Heart left ventricle (tissue), 16 donors: ENCODE measurements at regions of chr15 and their contacts with region 1.

Region 1: GRCh38 chr15:91833056-91833455 is 20.5 kb upstream of the SLCO3A1 start:
- DNase-seq: no peak
- ATAC-seq: no peak
- H3K4me3 ChIP-seq: no peak overlapping the region
- H3K27ac ChIP-seq: no peak overlapping the region
- H3K4me1 ChIP-seq: peaks cover 0 to 4% (median 0%) of the 10 kb centered on the region in 12 donors
- H3K27me3 ChIP-seq: peaks cover 0 to 3% (median 0%) of the 10 kb centered on the region in 9 donors
- CTCF ChIP-seq: no peak
- POLR2A ChIP-seq: no peak

Region 2: GRCh38 chr15:91790836-91791235 is 42.2 kb before region 1 on chr15:
- intact Hi-C with region 1: loop called in 1 of 10 experiments (anchors 5 kb)
- DNase-seq: no peak
- ATAC-seq: no peak
- H3K4me3 ChIP-seq: no peak overlapping the region
- H3K27ac ChIP-seq: peak overlapping the region in 1 of 12 donors; percentile 5
- H3K4me1 ChIP-seq: peaks cover 0 to 12% (median 0%) of the 10 kb centered on the region in 12 donors
- H3K27me3 ChIP-seq: peaks cover 0 to 3% (median 0%) of the 10 kb centered on the region in 9 donors
- CTCF ChIP-seq: no peak
- POLR2A ChIP-seq: no peak

Region 3: DNA sequence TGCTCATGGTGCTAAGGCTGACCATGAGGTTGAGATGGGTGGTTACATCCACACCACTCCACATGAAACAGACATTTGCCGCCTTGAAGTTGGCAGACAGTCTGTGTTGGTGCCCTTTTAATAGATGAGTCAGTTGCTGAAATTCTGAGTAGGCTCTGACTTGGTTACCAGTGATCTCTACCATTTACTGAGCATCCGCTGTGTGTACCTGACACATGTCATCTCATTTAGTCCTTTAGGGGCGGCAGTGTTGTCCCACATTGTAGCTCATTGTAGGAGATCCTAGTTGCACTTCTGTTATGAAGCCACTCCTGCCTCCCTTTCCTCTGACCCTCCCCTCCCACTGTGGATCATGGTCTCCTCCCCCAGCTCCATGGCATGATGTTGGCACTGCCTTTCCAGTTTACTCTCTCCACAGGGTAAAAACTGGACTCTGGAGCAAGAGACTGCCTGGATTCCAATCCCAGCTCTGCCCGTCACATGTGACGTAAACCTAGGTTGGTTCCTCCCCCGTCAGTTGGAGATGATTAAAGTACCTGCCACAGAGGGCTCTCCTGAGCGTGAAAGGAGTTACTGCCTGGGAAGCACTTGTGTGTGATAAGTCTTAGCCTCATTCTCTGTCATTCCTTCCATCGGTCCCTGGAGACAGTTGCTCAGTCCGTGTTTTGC is 42.1 kb after region 1 on chr15:
- intact Hi-C with region 1: no loop called
- DNase-seq: no peak
- ATAC-seq: peak in 2 of 4 donors; percentile 23 to 51
- H3K4me3 ChIP-seq: no peak overlapping the region
- H3K27ac ChIP-seq: no peak overlapping the region
- H3K4me1 ChIP-seq: peaks cover 0 to 40% (median 19%) of the 10 kb centered on the region in 12 donors
- H3K27me3 ChIP-seq: no peaks in the 10 kb centered on the region
- CTCF ChIP-seq: no peak
- POLR2A ChIP-seq: no peak